ENCODE measurements at regions of chr6 and their contacts with region 1.

Region 1: DNA sequence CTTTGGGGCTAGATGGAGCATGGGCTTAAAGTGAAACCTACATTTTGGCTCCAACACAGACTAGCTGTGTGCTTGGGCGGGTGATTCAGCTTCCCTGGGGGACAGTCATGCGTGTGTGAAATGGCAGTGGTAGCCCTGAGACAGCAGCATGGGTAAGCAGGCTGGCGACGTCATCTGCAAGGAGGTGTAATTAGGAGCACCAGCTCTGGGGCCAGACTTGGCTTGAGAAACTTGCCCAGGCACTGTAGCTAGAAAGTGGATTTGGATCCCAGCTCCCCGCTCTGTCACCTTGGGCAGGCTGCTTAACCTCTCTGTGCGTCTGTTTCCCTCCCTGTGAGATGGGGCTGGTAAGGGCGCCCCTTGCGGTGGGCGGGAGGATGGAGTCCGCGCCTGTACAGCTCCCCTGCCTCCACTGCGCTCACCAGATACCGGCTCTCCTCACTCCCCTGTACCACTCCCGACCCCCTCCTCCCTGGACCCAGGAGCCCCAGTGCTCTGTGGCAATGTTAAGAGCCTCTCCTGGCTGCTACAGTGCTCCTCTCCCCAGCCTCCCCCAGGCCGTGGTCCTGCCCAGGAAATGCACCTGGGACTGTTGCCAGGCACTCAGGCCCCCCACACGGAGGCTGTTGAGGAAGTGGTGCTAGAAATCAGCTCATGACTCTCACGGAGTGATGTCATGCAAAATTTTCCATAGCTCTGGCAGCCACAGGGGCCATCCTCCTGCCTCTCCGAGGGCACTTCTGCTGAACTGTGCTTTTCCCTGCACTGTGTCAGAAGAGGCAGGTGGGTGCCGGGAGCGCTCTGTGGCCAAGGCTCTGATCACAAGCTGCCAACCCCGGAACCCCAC is 44.6 kb downstream of the SYNJ2 start:
- DNase-seq: peak; percentile 64 to 92 (median 80)
- ATAC-seq: peak; percentile 77
- H3K4me3 ChIP-seq: peak overlapping the region; percentile 24 to 42
- H3K4me3 Mint-ChIP-seq: peak overlapping the region; percentile 81
- H3K27ac ChIP-seq: peak overlapping the region; percentile 65 to 91
- H3K27ac Mint-ChIP-seq: peak overlapping the region; percentile 97
- H3K4me1 ChIP-seq: peaks cover 27% of the 10 kb centered on the region
- H3K4me1 Mint-ChIP-seq: peaks cover 36% of the 10 kb centered on the region
- H3K27me3 ChIP-seq: no peaks in the 10 kb centered on the region
- H3K27me3 Mint-ChIP-seq: no peaks in the 10 kb centered on the region
- CTCF ChIP-seq: peak; percentile 75

Region 2: GRCh38 chr6:157981395-157982296 is 44.6 kb before region 1 on chr6 and contains the start of gene SYNJ2:
- CTCF ChIA-PET with region 1: interaction called, 23 read pairs
- POLR2A ChIA-PET with region 1: interaction called, 5 read pairs
- intact Hi-C with region 1: loop called (anchors 1 kb)
- DNase-seq: peak; percentile 66 to 90 (median 82)
- ATAC-seq: peak; percentile 91
- H3K4me3 ChIP-seq: peak within 1 kb of the TSS; percentile 69 to 87
- H3K4me3 Mint-ChIP-seq: peak within 1 kb of the TSS; percentile 89
- H3K27ac ChIP-seq: peak within 1 kb of the TSS; percentile 43 to 55
- H3K27ac Mint-ChIP-seq: peak within 1 kb of the TSS; percentile 55
- H3K4me1 ChIP-seq: peaks cover 49% of the 10 kb centered on the region
- H3K4me1 Mint-ChIP-seq: peaks cover 47% of the 10 kb centered on the region
- H3K27me3 ChIP-seq: no peaks in the 10 kb centered on the region
- H3K27me3 Mint-ChIP-seq: no peaks in the 10 kb centered on the region
- CTCF ChIP-seq: peak; percentile 38
- total RNA-seq, gene SYNJ2: 28.4 to 29.5 TPM

Region 3: DNA sequence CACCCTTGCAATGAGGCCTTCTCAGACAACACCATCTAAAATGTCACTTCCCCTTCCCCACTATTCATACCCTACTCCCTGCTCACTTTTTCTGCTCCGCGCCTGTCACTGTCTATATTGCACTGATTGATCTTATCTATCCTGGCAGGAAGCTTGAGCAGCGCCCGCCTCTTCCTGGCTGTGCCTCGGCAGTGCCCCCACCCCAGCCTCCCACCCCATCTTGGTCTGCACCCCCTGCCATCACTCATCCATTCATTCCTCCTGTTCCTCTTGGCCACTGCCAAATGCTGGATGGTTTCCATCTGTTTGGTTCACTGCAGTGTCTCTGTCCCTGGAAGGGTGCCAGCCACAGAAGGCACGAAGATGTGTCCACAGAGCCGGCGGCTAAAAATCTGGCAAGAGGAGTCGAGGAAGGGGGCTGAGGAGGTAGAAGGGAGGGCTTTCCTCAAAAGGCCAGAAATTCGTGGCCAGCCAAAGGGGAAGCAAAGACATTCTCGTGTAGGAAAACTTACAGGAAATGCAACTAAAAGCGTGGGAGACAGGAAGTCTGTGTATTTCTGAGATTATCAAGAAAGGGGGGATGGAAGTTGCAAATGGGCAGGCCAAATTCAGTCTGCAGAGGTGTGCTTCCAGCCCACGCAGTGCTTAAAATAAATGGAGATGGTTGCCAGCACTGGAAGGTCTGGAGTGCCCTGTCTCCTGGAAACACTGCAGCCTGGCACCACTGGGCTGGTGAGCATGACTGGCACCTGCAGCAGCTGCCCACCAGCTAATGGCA is 17.0 kb before region 1 on chr6:
- CTCF ChIA-PET with region 1: interaction called, 29 read pairs
- POLR2A ChIA-PET with region 1: interaction called, 5 read pairs
- intact Hi-C with region 1: no loop called
- DNase-seq: peak in 4 of 9 experiments; percentile 17 to 32 (median 30)
- ATAC-seq: peak; percentile 49
- H3K4me3 ChIP-seq: peak overlapping the region; percentile 23 to 42
- H3K4me3 Mint-ChIP-seq: peak overlapping the region; percentile 82
- H3K27ac ChIP-seq: peak overlapping the region in 1 of 2 experiments; percentile 14
- H3K27ac Mint-ChIP-seq: peak overlapping the region; percentile 71
- H3K4me1 ChIP-seq: peaks cover 27% of the 10 kb centered on the region
- H3K4me1 Mint-ChIP-seq: peaks cover 72% of the 10 kb centered on the region
- H3K27me3 ChIP-seq: no peaks in the 10 kb centered on the region
- H3K27me3 Mint-ChIP-seq: no peaks in the 10 kb centered on the region
- CTCF ChIP-seq: no peak

Region 4: GRCh38 chr6:158046201-158047126 is 20.2 kb after region 1 on chr6:
- CTCF ChIA-PET with region 1: interaction called, 11 read pairs
- POLR2A ChIA-PET with region 1: interaction called, 4 read pairs
- intact Hi-C with region 1: loop called in 1 of 2 experiments (anchors 1 kb)
- DNase-seq: peak in 5 of 9 experiments; percentile 19 to 49 (median 40)
- ATAC-seq: peak; percentile 65
- H3K4me3 ChIP-seq: no peak overlapping the region
- H3K4me3 Mint-ChIP-seq: peak overlapping the region; percentile 63
- H3K27ac ChIP-seq: peak overlapping the region; percentile 23 to 25
- H3K27ac Mint-ChIP-seq: peak overlapping the region; percentile 85
- H3K4me1 ChIP-seq: peaks cover 22% of the 10 kb centered on the region
- H3K4me1 Mint-ChIP-seq: peaks cover 25% of the 10 kb centered on the region
- H3K27me3 ChIP-seq: no peaks in the 10 kb centered on the region
- H3K27me3 Mint-ChIP-seq: no peaks in the 10 kb centered on the region
- CTCF ChIP-seq: no peak

Region 5: DNA sequence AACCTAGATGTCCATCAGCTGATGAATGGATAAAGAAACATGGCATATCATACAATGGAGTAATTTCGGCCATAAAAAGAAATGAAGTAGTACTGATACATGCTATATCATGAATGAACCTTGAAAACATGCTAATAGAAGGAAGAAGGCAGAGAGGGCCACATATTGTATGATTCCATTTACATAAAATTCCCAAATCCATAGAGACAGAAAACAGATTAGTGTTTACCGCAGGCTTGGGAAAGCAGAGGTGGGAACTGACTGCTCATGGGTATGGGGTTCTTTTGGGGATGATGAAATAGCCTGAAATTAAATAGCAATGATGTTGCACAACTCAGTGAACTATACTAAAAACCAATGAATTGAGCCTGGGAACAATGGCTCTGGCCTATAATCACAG is 83.5 kb after region 1 on chr6:
- CTCF ChIA-PET with region 1: no interaction called
- POLR2A ChIA-PET with region 1: no interaction called
- intact Hi-C with region 1: no loop called
- DNase-seq: no peak
- ATAC-seq: no peak
- H3K4me3 ChIP-seq: no peak overlapping the region
- H3K4me3 Mint-ChIP-seq: no peak overlapping the region
- H3K27ac ChIP-seq: no peak overlapping the region
- H3K27ac Mint-ChIP-seq: no peak overlapping the region
- H3K4me1 ChIP-seq: no peaks in the 10 kb centered on the region
- H3K4me1 Mint-ChIP-seq: no peaks in the 10 kb centered on the region
- H3K27me3 ChIP-seq: no peaks in the 10 kb centered on the region
- H3K27me3 Mint-ChIP-seq: no peaks in the 10 kb centered on the region
- CTCF ChIP-seq: no peak

Region 6: DNA sequence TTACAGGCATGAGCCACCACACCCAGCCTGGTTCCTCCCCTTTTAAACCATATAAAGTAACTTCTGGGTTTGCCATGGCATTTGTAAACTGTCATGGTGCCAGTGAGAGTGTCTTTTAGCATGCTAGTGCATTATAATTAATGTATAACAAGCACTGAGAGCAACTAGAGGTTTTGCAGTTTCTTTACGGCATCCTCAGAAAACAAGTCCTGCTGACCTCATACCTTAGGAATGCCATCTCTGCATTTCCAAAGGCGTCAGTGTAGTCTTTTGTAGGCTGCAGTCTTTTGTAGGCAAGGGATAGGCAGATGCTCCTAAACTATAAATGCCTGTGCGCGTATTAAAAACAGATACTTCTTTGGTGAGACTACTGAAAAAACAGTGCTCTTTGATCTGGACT is 867.9 kb after region 1 on chr6:
- CTCF ChIA-PET with region 1: no interaction called
- POLR2A ChIA-PET with region 1: no interaction called
- intact Hi-C with region 1: no loop called
- DNase-seq: no peak
- ATAC-seq: no peak
- H3K4me3 ChIP-seq: no peak overlapping the region
- H3K4me3 Mint-ChIP-seq: no peak overlapping the region
- H3K27ac ChIP-seq: no peak overlapping the region
- H3K27ac Mint-ChIP-seq: no peak overlapping the region
- H3K4me1 ChIP-seq: no peaks in the 10 kb centered on the region
- H3K4me1 Mint-ChIP-seq: no peaks in the 10 kb centered on the region
- H3K27me3 ChIP-seq: no peaks in the 10 kb centered on the region
- H3K27me3 Mint-ChIP-seq: no peaks in the 10 kb centered on the region
- CTCF ChIP-seq: no peak

Measured in CD8-positive, alpha-beta T cell (primary cell).